ENCODE measurements at regions of chr5 and their contacts with region 1.

Region 1: DNA sequence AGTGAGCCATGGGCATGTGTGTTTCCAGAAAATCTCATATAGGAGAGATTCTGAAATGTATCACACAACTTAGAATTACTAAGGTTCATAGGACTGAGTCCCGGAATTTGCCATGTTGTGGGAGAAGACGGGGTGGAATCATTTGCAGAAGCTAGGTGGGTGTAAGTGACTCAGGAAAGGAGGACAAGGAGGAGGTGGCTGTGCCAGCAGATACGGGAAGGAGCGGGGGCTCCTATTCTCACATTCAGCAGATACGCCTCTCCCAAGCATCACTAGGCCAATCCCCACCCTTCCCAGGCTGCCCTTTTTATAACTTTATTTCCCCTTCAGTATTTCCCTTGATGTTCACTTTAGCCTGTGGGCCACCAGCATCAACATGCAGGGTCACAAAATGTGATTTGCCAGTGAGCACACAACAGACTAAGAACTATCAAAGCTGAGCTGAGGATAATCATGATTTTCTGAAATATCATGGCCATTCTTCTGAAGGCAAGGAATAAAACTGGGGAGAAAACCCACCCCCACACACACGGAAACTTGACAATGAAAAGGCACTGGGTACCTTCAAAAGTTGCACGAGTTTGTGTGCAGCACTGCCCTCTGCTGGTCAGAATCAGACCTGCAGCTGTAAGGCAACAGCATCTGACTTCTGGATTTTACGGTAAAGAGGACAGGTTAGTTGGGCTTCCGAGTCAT is 133.2 kb downstream of the MTX3 start:
- DNase-seq: peak; percentile 85
- ATAC-seq: peak; percentile 60
- H3K4me3 Mint-ChIP-seq: no peak overlapping the region
- H3K27ac Mint-ChIP-seq: no peak overlapping the region
- H3K4me1 Mint-ChIP-seq: no peaks in the 10 kb centered on the region
- H3K27me3 Mint-ChIP-seq: peaks cover 31% of the 10 kb centered on the region

Region 2: DNA sequence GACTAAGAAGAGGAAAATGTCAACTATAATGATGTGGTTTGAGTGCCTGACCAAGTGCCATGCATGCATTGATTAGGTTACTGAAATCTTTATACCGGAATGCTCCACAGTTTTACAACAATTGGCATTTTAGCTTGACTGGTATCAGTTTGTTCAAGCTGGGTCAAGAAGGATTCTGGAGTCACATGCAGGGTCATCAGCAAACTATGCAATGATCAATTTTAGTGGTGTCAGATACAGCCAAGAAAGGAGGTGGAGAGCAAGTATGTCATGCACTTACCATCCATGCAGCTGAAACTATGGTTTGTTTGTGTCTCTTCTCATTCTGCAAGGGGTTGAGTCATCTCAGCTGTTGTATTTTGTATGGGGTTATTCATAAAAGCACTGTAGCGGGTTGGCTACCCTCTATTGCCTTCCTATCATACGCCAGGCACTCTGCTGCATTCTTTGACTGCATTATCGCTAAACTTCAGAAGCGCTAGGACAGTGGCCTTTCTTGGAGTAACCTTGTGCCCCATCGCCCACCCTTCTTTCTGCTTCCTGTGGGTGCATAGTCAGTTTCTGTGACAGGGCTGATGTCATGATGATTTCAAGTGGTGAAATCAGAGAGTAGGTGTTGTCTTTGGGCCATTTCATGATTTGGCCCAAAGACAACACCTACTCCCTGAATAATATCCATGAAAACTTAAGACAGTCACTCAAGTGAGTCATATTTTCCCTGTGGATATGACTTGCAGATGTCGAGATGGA is 12.2 kb before region 1 on chr5:
- CTCF ChIA-PET with region 1: interaction called, 10 read pairs
- POLR2A ChIA-PET with region 1: no interaction called
- DNase-seq: peak; percentile 51
- ATAC-seq: peak; percentile 47
- H3K4me3 Mint-ChIP-seq: no peak overlapping the region
- H3K27ac Mint-ChIP-seq: peak overlapping the region; percentile 41
- H3K4me1 Mint-ChIP-seq: peaks cover 32% of the 10 kb centered on the region
- H3K27me3 Mint-ChIP-seq: peaks cover 4% of the 10 kb centered on the region

Region 3: GRCh38 chr5:79955941-79956670 is 98.2 kb after region 1 on chr5:
- CTCF ChIA-PET with region 1: no interaction called
- POLR2A ChIA-PET with region 1: no interaction called
- DNase-seq: no peak
- ATAC-seq: no peak
- H3K4me3 Mint-ChIP-seq: no peak overlapping the region
- H3K27ac Mint-ChIP-seq: no peak overlapping the region
- H3K4me1 Mint-ChIP-seq: no peaks in the 10 kb centered on the region
- H3K27me3 Mint-ChIP-seq: peaks cover 4% of the 10 kb centered on the region